Activated CD8-positive, alpha-beta memory T cell treated with anti-CD3 and anti-CD28 coated beads, Interleukin-2, amount 10 ng/mL, durations not matched to agents 7 days and 5 days (primary cell): ENCODE measurements at regions of chr19 and their contacts with region 1.

Region 1: DNA sequence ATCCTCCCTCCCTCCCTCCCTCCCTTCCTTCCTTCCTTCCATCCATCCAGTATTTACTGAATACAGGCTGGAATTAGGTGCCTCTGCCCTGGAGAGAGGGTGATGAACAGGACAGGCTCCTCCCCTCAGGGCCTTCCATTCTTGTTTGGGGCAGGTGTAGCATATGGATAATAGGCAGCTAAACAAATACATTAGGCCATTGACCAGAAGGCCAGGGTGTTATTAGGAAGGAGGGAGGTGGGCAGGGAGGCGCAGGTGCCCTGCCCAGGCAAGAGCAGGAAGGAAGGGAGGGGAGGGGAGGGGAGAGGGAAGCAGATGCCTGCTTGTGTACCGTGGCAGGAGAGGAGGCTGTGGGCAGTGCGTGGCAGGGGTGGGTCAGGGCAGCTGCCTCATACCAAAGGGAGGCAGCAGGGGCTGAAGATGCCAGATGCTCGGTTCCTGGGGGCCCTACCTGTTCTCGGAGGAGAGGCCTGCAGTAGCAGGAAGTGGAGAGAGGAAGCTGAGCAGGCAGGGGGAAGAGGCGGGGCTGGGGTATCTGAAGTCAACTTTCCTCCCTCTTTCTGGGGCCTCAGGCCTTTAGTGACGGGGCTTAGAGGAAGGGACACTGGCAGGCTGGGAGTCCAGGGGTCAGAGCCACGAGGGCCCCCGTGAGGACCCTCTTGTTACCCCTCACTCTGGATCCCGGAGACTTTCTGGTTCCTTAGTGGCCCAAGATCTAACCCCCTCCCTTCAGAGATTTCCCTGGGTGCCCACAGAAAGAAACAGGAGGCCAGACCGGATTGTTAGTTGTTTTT is at the start of gene RINL:
- DNase-seq: peak; percentile 85
- ATAC-seq: peak; percentile 93
- H3K4me3 Mint-ChIP-seq: peak within 1 kb of the TSS; percentile 91
- H3K27ac Mint-ChIP-seq: peak within 1 kb of the TSS; percentile 98
- H3K4me1 Mint-ChIP-seq: peaks cover 35% of the 10 kb centered on the region
- H3K27me3 Mint-ChIP-seq: no peaks in the 10 kb centered on the region
- total RNA-seq, gene RINL: 80.1 to 81.0 TPM

Region 2: DNA sequence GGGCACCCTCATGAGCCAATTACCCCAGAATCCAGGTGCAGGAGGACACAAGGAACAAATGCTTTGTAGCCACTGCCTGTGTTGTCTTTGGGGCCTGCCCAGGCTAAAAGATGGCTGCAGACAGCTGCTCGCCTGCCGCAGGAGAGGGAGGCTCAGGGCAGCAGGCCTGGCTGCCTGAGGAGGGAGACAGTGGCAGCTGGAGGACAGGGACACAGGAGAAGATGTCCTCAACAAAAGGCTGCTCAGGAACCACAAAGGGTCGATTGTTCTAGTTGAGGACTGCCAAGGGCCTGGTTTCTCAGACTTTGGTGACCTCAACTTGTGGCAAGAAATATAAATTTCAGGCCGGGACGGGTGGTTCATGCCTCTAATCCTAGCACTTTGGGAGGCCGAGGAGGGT is 13.8 kb after region 1 on chr19:
- CTCF ChIA-PET with region 1: interaction called, 55 read pairs
- DNase-seq: no peak
- ATAC-seq: no peak
- H3K4me3 Mint-ChIP-seq: no peak overlapping the region
- H3K27ac Mint-ChIP-seq: no peak overlapping the region
- H3K4me1 Mint-ChIP-seq: no peaks in the 10 kb centered on the region
- H3K27me3 Mint-ChIP-seq: no peaks in the 10 kb centered on the region